Dorsolateral prefrontal cortex (tissue), 120 donors: ENCODE measurements at regions of chr1 and their contacts with region 1.

Region 1: DNA sequence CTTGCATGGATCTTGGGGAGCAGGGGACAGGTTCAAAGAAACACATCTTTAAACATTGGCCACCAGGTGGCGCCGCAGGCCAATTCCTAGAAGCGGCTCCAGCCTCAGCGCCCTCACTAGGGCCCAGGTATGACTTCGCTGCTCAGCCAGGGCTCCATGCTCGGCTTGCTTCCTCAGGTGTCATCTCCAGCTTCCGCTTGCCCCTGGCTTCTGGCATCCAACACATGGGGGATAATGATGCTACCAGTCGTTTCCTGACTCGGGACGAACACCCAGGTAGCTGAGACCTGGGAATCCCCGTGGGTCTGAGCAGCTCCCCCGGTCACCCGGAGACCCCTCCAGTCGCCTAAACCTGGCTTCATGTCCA is 8.5 kb upstream of the MEX3A start:
- DNase-seq: peak; percentile 77 to 94 (median 86)
- H3K4me3 ChIP-seq: no peak overlapping the region
- H3K27ac ChIP-seq: peak overlapping the region in 11 of 59 donors; percentile 1 to 56 (median 31)
- H3K27me3 ChIP-seq: no peaks in the 10 kb centered on the region
- CTCF ChIP-seq: peak; percentile 85 to 97 (median 92)

Region 2: GRCh38 chr1:155951753-155952504 is 138.9 kb before region 1 on chr1:
- intact Hi-C with region 1: no loop called
- DNase-seq: no peak
- H3K4me3 ChIP-seq: no peak overlapping the region
- H3K27ac ChIP-seq: peak overlapping the region in 44 of 59 donors; percentile 4 to 72 (median 52)
- H3K27me3 ChIP-seq: no peaks in the 10 kb centered on the region
- CTCF ChIP-seq: no peak

Region 3: DNA sequence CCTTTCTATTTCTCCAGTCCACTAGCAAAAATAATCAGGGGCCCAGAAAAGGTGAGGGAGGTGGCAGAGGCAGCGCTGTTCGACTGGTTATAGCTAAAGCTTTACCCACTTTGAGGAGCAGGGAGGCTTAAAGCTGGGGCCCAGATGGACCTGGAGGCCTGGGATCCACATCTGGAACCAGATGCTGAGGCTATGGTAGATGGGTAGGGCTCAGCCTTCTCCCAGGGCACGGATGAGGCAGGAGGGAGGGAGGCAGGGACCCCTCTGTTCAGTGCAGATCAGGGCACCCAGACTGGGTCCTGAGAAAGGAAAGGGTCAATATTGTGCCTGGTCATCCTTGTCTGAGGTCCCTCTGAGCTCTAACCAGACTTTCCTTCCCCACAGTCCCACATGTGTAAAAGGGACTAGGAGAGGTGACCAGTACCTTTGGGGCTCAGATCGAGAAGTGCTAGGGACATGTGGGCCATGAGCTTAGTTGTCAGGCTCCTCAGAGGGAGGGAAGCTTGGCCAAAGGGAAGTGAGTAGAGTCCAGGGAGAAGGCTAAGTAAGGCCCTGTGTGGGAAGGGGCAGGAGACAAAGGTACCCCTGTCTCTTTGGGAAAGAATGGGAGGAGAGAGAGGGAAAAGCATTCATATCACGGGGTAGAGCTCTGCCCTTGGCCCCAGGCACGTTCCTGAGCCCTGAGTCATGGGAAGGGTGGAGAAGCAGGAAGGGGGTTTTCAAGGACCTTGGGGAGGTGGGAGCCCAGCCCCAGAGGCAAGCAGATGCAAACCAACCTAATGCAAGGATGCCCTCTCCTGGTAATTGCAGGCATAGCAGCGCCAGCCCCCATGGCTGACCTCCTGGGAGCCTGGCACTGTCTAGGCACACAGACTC is 39.1 kb after region 1 on chr1:
- intact Hi-C with region 1: loop called (anchors 1 to 2 kb)
- DNase-seq: peak; percentile 55 to 83 (median 71)
- H3K4me3 ChIP-seq: no peak overlapping the region
- H3K27ac ChIP-seq: peak overlapping the region; percentile 43 to 98 (median 87)
- H3K27me3 ChIP-seq: no peaks in the 10 kb centered on the region
- CTCF ChIP-seq: peak; percentile 89 to 100 (median 98)

Region 4: DNA sequence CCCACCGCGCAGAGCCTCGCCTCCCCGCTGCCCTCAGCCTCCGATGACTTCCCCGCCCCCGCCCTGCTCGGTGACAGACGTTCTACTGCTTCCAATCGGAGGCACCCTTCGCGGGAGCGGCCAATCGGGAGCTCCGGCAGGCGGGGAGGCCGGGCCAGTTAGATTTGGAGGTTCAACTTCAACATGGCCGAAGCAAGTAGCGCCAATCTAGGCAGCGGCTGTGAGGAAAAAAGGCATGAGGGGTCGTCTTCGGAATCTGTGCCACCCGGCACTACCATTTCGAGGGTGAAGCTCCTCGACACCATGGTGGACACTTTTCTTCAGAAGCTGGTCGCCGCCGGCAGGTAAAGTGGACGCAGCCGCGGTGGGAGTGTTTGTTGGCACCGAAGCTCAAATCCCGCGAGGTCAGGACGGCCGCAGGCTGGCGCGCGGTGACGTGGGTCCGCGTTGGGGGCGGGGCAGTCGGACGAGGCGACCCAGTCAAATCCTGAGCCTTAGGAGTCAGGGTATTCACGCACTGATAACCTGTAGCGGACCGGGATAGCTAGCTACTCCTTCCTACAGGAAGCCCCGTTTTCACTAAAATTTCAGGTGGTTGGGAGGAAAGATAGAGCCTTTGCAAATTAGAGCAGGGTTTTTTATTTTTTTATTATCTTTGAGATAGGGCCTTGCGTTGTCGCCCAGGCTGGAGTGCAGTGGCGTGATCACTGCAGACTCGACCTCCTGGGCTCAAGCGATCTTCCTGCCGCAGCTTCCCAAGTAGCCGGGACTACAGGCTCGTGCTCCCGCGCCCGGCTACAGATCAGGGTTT is 122.2 kb after region 1 on chr1 and contains the start of gene PMF1:
- intact Hi-C with region 1: loop called in 1 of 2 experiments (anchors 5 kb)
- DNase-seq: peak; percentile 95 to 98 (median 97)
- H3K4me3 ChIP-seq: peak within 1 kb of the TSS; percentile 41 to 94 (median 80)
- H3K27ac ChIP-seq: peak within 1 kb of the TSS; percentile 83 to 100 (median 98)
- H3K27me3 ChIP-seq: no peaks in the 10 kb centered on the region
- CTCF ChIP-seq: peak in 37 of 56 donors; percentile 9 to 62 (median 32)
- total RNA-seq, gene PMF1: 16.6 to 45.3 (median 27.0) TPM

Region 5: GRCh38 chr1:156226116-156226538 is 135.3 kb after region 1 on chr1:
- intact Hi-C with region 1: loop called in 1 of 2 experiments (anchors 2 kb)
- DNase-seq: no peak
- H3K4me3 ChIP-seq: no peak overlapping the region
- H3K27ac ChIP-seq: peak overlapping the region; percentile 2 to 98 (median 87)
- H3K27me3 ChIP-seq: no peaks in the 10 kb centered on the region
- CTCF ChIP-seq: no peak

Region 6: DNA sequence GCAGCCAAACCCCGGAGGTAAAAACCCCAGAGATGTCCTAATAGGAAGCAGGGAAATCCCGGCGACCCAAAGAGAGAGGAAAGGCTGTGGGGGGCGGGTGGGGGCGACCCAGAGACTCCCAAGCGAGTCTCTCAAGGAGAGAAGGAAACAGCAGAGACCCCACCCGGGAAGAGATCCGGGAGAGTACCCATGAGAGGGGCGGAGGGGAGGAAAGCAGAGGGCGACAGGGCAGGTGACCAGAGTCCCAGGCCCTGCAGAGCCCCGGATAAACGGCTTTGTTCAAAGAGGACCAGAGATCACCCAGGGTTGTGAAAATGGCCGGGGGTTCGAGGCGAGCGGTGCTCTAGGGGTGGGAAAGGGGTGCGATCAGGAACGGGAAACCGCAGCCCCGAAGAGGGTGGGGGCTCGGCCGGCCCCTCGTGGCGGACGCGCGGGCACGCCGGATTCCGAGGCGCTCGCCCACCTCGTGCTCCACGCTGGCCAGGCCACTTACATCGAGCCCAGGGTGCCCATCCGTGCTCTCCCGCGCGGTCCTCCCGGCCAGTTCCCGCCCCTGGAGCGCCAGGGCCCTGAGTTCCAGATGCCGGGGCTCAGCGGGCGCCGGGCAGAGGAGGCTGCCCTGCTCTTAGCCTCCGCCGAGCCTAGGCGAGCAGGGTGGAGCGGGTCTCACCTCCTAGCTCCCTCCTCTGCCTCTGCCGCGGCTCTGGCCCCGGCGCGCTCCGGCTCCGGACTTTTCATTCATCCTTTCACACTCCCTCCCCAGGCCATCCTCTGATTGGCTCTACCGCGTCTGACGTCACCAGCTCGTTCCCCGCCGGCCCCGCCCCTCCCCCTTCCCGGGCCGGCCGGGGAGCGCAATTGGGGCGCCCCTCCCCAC is 330.5 kb after region 1 on chr1:
- intact Hi-C with region 1: no loop called
- DNase-seq: peak; percentile 85 to 96 (median 92)
- H3K4me3 ChIP-seq: peak overlapping the region; percentile 54 to 90 (median 74)
- H3K27ac ChIP-seq: peak overlapping the region in 57 of 59 donors; percentile 33 to 100 (median 89)
- H3K27me3 ChIP-seq: peaks cover 0 to 36% (median 0%) of the 10 kb centered on the region in 45 donors
- CTCF ChIP-seq: peak in 7 of 56 donors; percentile 9 to 25 (median 15)

Region 7: DNA sequence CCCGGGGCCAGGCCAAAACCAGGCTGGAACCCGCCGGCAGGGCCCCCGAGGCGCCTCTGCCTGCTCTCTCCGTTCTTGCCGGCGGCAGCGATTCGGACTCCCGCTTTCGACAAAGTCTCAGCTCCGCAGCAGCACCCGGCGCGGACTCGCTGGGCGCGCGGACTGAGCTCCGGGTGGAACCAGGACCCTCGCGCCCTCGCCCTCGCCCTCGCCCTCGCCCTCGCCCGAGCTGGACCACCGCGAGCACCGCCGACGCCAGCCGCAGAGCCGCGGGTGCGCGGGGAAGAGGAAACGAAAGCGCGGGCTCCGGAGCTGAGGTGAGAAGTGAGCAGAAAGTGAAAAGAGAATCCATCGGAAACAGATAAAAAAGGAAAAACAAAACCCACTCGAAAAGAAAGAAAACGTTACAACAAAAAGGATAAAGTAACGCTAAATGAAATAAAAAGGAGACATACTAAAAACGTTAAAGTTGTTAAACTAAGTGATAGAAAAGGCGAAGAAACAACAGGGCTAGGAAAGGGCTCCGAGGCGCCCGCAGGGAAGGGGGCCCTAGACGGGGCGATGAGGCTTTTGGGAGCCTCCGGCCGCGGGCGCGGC is 344.8 kb after region 1 on chr1:
- intact Hi-C with region 1: no loop called
- DNase-seq: no peak
- H3K4me3 ChIP-seq: peak overlapping the region; percentile 27 to 75 (median 62)
- H3K27ac ChIP-seq: peak overlapping the region in 57 of 59 donors; percentile 9 to 100 (median 88)
- H3K27me3 ChIP-seq: peaks cover 0 to 57% (median 6%) of the 10 kb centered on the region in 45 donors
- CTCF ChIP-seq: peak in 1 of 56 donors; percentile 12